ENCODE measurements at regions of chr7 and their contacts with region 1.

Region 1: DNA sequence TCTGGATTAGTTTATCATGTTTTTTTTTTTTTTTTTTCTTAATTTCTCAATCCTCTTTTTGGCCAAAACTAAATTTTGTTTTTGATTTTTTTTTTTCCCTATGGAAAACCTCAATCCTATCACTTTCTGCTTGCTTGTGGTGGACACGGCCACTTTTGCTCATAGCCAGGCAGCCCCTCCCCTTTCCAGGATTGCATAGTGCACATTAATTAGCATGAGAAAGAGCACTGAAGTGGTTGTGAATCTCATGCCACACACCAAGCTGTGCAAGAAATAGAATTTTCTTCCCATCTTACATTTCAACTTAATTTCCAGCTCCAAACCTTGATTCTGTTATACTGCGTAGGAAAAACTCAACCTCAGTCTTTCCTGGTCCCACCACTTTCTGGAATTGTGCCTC is 34.6 kb downstream of the MGAM2 start:
- DNase-seq: no peak
- H3K4me3 ChIP-seq: no peak overlapping the region
- H3K27ac ChIP-seq: no peak overlapping the region
- H3K4me1 ChIP-seq: no peaks in the 10 kb centered on the region
- H3K27me3 ChIP-seq: no peaks in the 10 kb centered on the region
- CTCF ChIP-seq: no peak
- POLR2A ChIP-seq: no peak

Region 2: DNA sequence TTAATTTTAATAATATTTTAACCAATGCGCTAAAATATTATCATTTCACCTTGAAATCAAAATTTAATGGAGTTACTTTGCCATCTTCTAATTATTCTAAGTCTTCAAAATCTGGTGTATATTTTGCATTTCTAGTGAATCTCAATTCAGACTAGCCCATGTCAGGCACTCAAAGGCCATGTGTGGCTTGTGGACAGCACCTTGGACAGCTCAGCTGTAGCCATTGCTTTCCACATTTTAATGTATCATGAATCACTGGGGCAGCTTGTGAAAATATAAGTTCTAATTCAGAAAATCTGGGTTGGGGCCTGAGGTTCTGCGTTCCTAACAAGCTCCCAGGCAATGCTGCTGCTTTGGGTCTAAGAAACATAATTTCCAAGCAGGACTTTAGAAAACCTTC is 22.6 kb after region 1 on chr7:
- intact Hi-C with region 1: no loop called
- DNase-seq: no peak
- H3K4me3 ChIP-seq: no peak overlapping the region
- H3K27ac ChIP-seq: no peak overlapping the region
- H3K4me1 ChIP-seq: no peaks in the 10 kb centered on the region
- H3K27me3 ChIP-seq: no peaks in the 10 kb centered on the region
- CTCF ChIP-seq: no peak
- POLR2A ChIP-seq: no peak

Region 3: DNA sequence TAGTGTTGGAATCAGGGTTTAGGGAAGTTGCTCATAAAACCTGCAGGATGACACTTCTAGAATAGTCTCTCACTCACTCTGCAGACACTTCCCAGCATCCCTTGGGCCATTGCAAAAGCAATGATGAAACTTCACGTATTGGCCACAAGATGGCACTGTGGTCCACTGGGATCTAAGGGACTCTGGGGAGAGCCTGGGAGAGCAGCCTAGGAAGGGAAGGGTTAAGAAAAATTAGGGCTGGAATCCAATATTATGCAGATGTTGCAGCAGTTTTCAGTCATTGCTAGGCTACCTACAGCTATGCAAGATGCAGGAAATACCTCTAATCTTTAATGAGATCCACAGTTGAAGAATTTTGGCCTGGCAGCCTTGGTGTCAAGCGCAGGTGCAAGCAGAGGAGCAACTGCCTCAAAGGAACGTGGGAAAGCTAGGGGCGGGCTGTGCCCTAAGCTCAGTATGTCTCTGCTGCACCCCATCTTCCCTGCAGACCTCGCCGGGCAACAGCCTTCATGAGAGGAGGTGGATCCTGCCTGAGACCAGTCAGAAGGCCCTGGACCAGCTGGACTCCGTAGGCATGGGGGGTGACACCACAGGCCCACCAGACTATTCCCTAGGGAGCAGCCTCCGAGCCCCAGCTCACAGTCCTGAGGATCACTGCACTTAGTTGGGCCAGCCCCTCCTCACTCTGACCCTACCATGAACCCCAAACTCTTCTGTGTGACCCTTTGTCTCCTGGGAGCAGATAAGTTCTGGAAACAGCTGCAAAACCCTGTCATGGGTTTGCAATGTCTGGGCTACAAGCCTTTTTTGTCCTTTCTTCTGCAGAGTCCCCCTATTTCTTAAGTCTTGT is 239.6 kb after region 1 on chr7:
- intact Hi-C with region 1: loop called (anchors 5 kb)
- DNase-seq: no peak
- H3K4me3 ChIP-seq: no peak overlapping the region
- H3K27ac ChIP-seq: no peak overlapping the region
- H3K4me1 ChIP-seq: no peaks in the 10 kb centered on the region
- H3K27me3 ChIP-seq: no peaks in the 10 kb centered on the region
- CTCF ChIP-seq: peak; percentile 13 to 48 (median 35)
- POLR2A ChIP-seq: no peak